ENCODE measurements at regions of chr13 and their contacts with region 1.

Region 1: DNA sequence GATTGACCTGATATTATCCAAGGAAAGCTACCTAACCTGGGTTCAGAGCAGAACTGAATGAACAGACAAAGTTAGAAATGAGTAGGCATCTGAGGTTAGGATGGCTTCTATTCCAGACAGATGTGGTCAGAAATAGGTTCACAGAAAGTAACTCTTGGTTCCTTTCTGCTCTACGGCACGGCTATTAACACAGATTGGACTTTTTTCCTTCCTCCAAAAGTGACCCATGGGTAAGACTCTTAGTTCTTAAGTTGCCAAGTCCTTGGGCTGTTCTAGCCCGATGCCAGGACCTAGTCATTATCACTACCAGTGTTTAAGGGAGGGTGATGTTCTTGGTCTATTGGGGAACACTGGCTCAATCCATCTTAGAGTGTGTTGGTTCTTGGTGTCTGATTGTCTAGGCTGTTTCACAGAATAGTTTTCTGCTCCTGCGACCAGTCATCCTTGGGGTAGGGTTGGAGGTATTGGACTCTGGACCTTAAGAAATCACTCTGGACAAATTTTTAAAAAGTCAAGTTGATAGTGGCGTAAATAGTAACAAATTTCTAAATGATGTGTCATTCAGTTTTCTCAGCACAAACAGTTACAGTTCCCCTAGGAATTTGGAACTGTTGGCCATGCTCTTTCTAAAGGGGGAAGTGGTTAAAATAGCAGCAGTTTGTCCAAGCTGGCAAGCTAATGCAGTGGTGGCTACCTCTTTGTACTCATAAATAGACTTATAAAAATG is 60.1 kb upstream of the MYCBP2 start:
- DNase-seq: no peak
- H3K4me3 Mint-ChIP-seq: no peak overlapping the region
- H3K27ac Mint-ChIP-seq: no peak overlapping the region
- H3K4me1 Mint-ChIP-seq: peaks cover 16% of the 10 kb centered on the region
- H3K27me3 Mint-ChIP-seq: peaks cover 1% of the 10 kb centered on the region

Region 2: GRCh38 chr13:77196052-77196618 is 190.9 kb before region 1 on chr13:
- CTCF ChIA-PET with region 1: no interaction called
- POLR2A ChIA-PET with region 1: no interaction called
- intact Hi-C with region 1: no loop called
- DNase-seq: no peak
- H3K4me3 Mint-ChIP-seq: no peak overlapping the region
- H3K27ac Mint-ChIP-seq: no peak overlapping the region
- H3K4me1 Mint-ChIP-seq: peaks cover 3% of the 10 kb centered on the region
- H3K27me3 Mint-ChIP-seq: no peaks in the 10 kb centered on the region

Region 3: GRCh38 chr13:77351315-77351714 is 35.7 kb before region 1 on chr13:
- CTCF ChIA-PET with region 1: no interaction called
- POLR2A ChIA-PET with region 1: no interaction called
- intact Hi-C with region 1: no loop called
- DNase-seq: no peak
- H3K4me3 Mint-ChIP-seq: no peak overlapping the region
- H3K27ac Mint-ChIP-seq: no peak overlapping the region
- H3K4me1 Mint-ChIP-seq: peaks cover 8% of the 10 kb centered on the region
- H3K27me3 Mint-ChIP-seq: no peaks in the 10 kb centered on the region

Region 4: DNA sequence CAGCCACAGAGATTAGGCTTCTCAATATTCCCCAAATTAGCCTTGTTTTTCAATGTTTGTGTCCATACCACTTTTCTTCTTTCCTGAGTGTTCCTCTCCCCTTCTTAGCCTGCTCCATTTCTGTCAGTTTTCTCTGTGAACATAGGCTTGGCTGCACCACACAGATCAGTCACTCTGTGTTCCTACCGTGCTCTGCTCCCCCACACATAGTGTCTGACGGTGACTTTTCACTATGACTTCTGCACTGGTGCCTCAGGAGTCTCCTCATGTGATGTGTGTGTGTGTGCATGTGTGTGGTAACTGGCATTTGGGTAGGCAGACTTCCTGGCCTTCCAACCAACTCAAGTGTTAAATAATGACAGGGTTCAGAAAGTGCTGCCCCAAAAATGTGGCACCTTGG is 12.3 kb before region 1 on chr13:
- CTCF ChIA-PET with region 1: no interaction called
- POLR2A ChIA-PET with region 1: no interaction called
- intact Hi-C with region 1: loop called (anchors 2 kb)
- DNase-seq: peak; percentile 36
- H3K4me3 Mint-ChIP-seq: no peak overlapping the region
- H3K27ac Mint-ChIP-seq: no peak overlapping the region
- H3K4me1 Mint-ChIP-seq: peaks cover 4% of the 10 kb centered on the region
- H3K27me3 Mint-ChIP-seq: no peaks in the 10 kb centered on the region

Region 5: DNA sequence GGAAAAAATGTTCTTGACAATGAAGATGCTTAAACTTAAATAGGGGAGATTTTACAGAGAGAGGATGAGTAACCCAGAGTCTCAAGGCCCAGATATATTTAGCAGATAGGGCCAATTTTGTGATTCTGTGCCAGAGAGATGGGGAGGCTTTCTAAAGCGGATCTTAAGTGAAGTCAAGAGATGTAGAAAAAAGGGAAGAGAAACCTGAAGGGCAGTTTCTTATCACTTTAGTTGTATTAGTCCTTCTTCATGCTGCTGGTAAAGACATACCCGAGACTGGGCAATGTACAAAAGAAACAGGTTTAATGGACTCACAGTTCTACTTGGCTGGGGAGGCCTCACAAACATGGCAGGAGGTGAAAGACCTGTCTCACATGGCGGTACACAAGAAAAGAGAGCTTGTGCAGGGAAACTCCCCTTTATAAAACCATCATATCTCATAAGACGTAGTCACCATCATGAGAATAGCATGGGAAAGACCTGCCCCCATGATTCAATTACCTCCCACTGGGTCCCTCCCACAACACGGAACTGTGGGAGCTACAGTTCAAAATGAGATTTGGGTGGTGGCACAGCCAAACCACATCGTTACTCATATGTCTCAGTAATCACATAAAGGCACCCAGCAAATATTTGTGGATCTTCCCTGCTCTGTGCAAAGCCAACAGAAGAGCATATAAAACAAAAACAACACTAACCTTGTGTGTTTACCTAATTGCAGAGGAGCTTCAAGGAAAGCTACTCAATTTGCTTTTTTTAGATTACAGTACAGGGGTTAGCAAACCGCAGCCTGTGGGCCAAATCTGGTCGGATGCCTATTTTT is 42.5 kb after region 1 on chr13:
- CTCF ChIA-PET with region 1: no interaction called
- POLR2A ChIA-PET with region 1: interaction called, 7 read pairs
- intact Hi-C with region 1: loop called (anchors 1 kb)
- DNase-seq: peak; percentile 80
- H3K4me3 Mint-ChIP-seq: peak overlapping the region; percentile 7
- H3K27ac Mint-ChIP-seq: peak overlapping the region; percentile 77
- H3K4me1 Mint-ChIP-seq: peaks cover 17% of the 10 kb centered on the region
- H3K27me3 Mint-ChIP-seq: no peaks in the 10 kb centered on the region

Measured in activated CD4-positive, alpha-beta memory T cell treated with anti-CD3 and anti-CD28 coated beads for 36 hours (primary cell).